ENCODE measurements at regions of chr22 and their contacts with region 1.

Region 1: GRCh38 chr22:41022470-41023298 is 69.7 kb upstream of the EP300 start:
- DNase-seq: peak; percentile 97
- H3K4me3 ChIP-seq: peak overlapping the region; percentile 70 to 88 (median 77)
- H3K27ac ChIP-seq: peak overlapping the region; percentile 97 to 99 (median 98)
- H3K4me1 ChIP-seq: peaks cover 10 to 21% (median 20%) of the 10 kb centered on the region in 4 donors
- H3K27me3 ChIP-seq: no peaks in the 10 kb centered on the region
- CTCF ChIP-seq: no peak
- EP300 ChIP-seq: no peak
- POLR2A ChIP-seq: peak; percentile 76

Region 2: GRCh38 chr22:40950962-40951794 is 71.5 kb before region 1 on chr22 and contains the start of gene RBX1:
- intact Hi-C with region 1: loop called (anchors 2 kb)
- DNase-seq: peak; percentile 100
- H3K4me3 ChIP-seq: peak within 1 kb of the TSS; percentile 71 to 91 (median 86)
- H3K27ac ChIP-seq: peak within 1 kb of the TSS; percentile 90 to 98 (median 96)
- H3K4me1 ChIP-seq: peaks cover 31 to 45% (median 40%) of the 10 kb centered on the region in 4 donors
- H3K27me3 ChIP-seq: no peaks in the 10 kb centered on the region
- CTCF ChIP-seq: peak in 1 of 3 experiments; percentile 12
- EP300 ChIP-seq: no peak
- POLR2A ChIP-seq: peak; percentile 51
- total RNA-seq, gene RBX1: 35.6 to 44.4 (median 39.6) TPM